A673 (cell line): ENCODE measurements at regions of chr20 and their contacts with region 1.

Region 1: DNA sequence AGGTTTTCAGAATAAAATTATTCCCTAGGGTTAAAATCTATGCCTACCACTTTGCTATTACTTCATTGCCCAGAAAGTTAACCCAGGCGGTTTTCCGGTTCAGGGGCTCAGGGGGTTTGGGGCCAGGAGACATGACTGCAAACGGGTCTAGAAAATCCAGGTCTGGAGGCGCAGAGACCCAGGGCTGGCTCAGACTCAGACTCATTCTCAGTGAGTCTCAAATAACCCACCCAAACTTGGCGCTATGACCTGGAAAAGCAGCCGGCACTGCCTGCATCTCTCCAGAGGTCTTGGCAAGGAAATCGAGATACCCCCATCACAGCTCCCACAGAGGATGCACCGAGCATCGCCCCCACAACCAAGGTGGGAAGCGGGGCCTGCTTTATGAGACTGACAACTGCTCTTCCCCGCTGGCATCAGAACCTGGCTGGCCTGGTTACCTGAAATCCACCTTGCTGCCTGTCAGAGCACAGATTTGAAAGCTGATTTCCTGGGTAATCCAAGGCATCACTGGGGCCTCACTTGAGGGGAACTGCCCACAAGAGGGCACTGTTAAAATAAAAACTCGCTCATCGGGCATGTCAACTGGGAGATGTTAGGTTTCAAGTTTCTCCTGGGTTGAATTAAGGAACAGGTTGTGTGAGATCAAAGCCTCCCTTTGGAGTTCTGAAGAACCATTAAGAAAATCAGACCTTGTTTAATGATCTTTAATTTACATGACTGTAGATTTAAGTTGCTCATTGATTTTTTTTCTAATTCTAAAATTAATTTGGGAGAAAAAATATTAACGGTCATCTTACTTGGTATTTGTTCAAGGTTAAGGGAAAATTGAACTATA is 55.1 kb downstream of the KIF16B start:
- DNase-seq: peak; percentile 48
- H3K4me3 ChIP-seq: no peak overlapping the region
- H3K27ac ChIP-seq: no peak overlapping the region
- H3K4me1 ChIP-seq: no peaks in the 10 kb centered on the region
- H3K27me3 ChIP-seq: no peaks in the 10 kb centered on the region
- CTCF ChIP-seq: peak; percentile 73

Region 2: GRCh38 chr20:14829906-14830305 is 1688.3 kb before region 1 on chr20:
- CTCF ChIA-PET with region 1: no interaction called
- POLR2A ChIA-PET with region 1: no interaction called
- intact Hi-C with region 1: no loop called
- DNase-seq: no peak
- H3K4me3 ChIP-seq: no peak overlapping the region
- H3K27ac ChIP-seq: no peak overlapping the region
- H3K4me1 ChIP-seq: no peaks in the 10 kb centered on the region
- H3K27me3 ChIP-seq: no peaks in the 10 kb centered on the region
- CTCF ChIP-seq: no peak

Region 3: DNA sequence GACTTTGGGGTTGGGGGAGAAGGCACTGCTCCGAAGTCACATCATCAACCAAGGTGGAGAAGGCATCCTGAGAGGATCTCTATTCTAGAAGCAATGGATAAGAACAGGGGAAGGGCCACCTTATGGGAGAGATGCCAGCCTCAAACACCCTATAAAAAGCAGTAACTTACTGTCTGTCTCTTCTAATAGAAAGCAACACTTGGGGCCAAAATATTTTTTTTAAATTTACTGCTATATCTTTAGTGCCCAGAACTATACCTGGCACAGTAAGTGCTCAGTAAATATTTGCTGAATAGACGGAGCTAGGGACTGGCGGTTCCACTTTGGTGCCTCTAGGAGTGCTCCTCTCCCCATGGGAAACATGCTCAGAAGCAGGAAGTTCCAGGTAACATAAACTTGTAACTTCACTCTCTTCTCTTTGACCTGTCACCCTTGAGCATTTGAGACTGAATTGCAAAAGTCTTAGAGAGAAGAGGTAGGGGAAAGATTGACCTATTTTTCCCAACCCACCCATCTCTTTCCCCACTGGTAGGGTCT is 229.2 kb after region 1 on chr20:
- CTCF ChIA-PET with region 1: no interaction called
- POLR2A ChIA-PET with region 1: no interaction called
- intact Hi-C with region 1: loop called (anchors 5 kb)
- DNase-seq: no peak
- H3K4me3 ChIP-seq: no peak overlapping the region
- H3K27ac ChIP-seq: no peak overlapping the region
- H3K4me1 ChIP-seq: no peaks in the 10 kb centered on the region
- H3K27me3 ChIP-seq: peaks cover 23% of the 10 kb centered on the region
- CTCF ChIP-seq: no peak; the same call in 1 of the 2 replicates